ENCODE measurements at regions of chr15 and their contacts with region 1.

Region 1: DNA sequence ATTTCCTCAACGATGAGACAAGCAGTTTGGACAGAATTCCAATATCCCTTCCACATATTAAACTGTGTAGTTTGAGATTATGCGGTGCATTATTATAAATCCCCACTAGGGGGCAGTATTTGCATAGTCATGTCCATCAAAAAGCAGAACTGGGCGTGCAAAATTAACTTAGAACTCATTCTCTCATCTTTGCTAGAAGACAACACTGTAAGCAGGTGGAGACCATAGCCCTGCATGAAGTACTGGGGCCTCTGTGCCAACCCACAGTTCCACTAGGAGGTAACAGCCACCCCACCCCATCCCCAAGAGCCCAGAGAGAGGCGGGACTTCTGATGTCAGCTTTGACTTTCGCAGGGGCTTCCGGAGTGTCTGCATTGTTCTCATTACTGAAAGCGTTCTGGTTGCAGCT is 106.6 kb upstream of the TMC3 start:
- DNase-seq: peak in 1 of 2 experiments; percentile 61
- ATAC-seq: peak; percentile 44 to 90; a peak in 4 of 6 replicates
- H3K4me3 ChIP-seq: no peak overlapping the region
- H3K27ac ChIP-seq: no peak overlapping the region
- H3K4me1 ChIP-seq: no peaks in the 10 kb centered on the region
- CTCF ChIP-seq: peak; percentile 94
- EP300 ChIP-seq: no peak
- POLR2A ChIP-seq: no peak
- RAD21 ChIP-seq: peak; percentile 86 to 92

Region 2: GRCh38 chr15:81469154-81469553 is 11.5 kb before region 1 on chr15:
- CTCF ChIA-PET with region 1: interaction called, 30 read pairs
- POLR2A ChIA-PET with region 1: no interaction called
- DNase-seq: no peak
- ATAC-seq: no peak
- H3K4me3 ChIP-seq: no peak overlapping the region
- H3K27ac ChIP-seq: no peak overlapping the region
- H3K4me1 ChIP-seq: no peaks in the 10 kb centered on the region
- CTCF ChIP-seq: no peak
- EP300 ChIP-seq: no peak
- POLR2A ChIP-seq: no peak
- RAD21 ChIP-seq: no peak

Region 3: DNA sequence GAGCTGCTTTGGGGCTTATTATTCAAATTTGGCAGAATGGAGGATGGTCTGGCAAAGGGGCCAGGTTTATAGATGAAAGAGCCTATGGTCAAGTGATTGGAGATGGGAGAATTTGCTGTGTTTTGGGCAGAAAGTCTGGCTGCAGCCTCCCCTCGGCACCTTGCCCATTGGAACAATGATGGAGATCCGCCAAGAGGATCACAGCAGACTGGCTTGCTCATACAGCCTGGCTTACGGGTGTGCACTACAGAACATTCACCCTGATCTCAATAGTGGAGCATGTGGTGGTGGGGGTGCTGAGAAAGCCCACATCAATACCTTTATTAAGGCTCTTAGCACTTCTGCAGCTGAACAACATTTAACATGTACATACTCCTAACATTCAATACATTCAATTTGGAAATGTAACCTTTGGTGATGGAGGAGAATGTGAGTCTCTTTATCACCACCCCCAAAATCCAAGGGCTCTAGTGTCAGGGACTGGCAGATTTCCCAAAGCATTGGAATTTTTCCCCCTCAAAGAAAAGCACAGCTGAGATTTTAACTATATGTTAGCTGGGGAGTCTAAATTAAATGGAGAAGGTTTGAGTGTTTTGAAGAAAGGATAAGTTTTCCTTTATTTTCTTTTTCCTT is 11.8 kb after region 1 on chr15:
- CTCF ChIA-PET with region 1: interaction called, 22 read pairs
- POLR2A ChIA-PET with region 1: no interaction called
- DNase-seq: no peak
- ATAC-seq: peak in 1 of 2 experiments; percentile 24; a peak in 1 of 6 replicates
- H3K4me3 ChIP-seq: no peak overlapping the region
- H3K27ac ChIP-seq: no peak overlapping the region
- H3K4me1 ChIP-seq: no peaks in the 10 kb centered on the region
- CTCF ChIP-seq: no peak
- EP300 ChIP-seq: no peak
- POLR2A ChIP-seq: no peak
- RAD21 ChIP-seq: no peak

Measured in A549 (cell line).